Psoas muscle (tissue), 8 donors: ENCODE measurements at regions of chr19 and their contacts with region 1.

Region 1: DNA sequence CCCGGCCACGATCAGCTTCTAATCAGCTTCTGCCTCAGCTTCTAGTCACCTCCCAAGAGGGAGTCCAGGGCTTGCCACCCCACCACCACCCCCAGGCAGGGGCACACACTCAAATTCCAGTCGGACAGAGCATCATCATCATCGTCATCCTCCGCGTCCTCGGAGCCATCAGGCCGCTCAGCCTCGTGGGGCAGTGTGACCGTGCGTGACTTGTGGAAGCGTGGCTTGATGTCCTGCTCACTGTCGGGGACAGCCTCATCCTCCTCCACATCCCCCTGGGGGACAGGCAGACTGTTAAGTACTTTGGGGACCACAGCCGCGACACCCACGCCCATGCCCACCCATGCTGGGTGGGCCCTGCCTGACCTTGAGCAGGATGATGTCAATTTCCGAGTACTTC is 12.5 kb downstream of the TNPO2 start:
- DNase-seq: no peak
- ATAC-seq: peak in 1 of 4 donors; percentile 10
- H3K4me3 ChIP-seq: no peak overlapping the region
- H3K27ac ChIP-seq: no peak overlapping the region
- H3K4me1 ChIP-seq: no peaks in the 10 kb centered on the region
- H3K27me3 ChIP-seq: no peaks in the 10 kb centered on the region
- CTCF ChIP-seq: no peak

Region 2: DNA sequence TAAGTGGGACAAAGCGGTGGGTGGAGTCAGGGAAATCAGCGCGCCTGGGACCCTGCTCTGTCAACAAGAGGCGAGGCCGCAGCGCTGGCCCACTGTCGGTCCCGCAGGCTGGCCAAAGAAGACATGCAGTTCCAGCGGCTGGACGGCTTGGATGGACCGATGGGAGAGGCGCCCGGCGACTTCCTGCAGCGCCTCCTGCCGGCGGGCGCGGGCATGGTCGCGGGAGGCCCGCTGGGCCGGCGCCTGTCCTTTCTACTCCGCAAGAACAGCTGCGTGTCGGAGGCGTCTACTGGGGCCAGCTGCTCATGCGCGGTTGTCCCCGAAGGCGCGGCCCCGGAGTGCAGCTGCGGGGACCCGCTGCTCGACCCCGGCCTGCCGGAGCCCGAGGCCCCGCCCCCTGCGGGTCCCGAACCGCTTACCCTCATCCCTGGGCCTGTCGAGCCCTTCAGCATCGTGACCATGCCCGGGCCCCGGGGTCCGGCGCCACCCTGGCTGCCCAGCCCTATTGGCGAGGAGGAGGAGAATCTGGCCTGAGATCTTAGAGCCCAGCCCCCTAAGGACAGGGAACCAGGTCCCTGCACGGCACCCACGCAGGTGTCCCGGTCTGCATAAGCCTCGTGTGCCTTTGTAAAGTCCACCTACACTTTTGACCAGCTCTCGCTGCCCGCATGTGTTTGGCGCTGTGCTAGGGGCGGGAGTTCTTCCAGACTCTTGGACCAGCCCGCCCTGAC is 46.5 kb after region 1 on chr19:
- intact Hi-C with region 1: loop called in 1 of 2 experiments (anchors 2 kb)
- DNase-seq: peak; percentile 79 to 85
- ATAC-seq: peak; percentile 82 to 91 (median 84)
- H3K4me3 ChIP-seq: peak overlapping the region; percentile 52
- H3K27ac ChIP-seq: peak overlapping the region; percentile 30
- H3K4me1 ChIP-seq: no peaks in the 10 kb centered on the region
- H3K27me3 ChIP-seq: peaks cover 0 to 9% (median 3%) of the 10 kb centered on the region in 3 donors
- CTCF ChIP-seq: peak; percentile 86